ENCODE measurements at regions of chr7 and their contacts with region 1.

Region 1: DNA sequence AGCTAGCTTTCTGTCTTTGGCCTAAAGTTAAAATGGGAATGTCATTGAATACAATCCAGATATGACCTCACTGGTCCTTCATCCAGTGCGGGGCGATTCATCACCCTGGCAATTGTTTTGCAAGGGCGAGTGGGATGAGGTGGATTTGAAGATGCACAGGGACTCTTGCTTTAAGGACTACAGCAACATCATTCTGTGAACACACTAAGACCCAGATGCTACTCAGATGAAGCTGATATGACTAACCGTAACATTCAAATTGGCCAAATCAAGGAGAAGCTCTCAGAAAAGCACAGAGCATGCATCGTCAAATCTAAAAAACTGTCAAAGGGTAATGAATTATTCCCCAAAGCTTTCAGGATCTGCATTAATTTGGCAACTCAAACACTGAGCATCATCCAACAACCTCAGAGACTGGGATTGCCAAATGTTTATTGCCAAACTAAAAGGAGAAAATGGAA is 12.8 kb downstream of the CPA1 start:
- DNase-seq: no peak
- ATAC-seq: no peak
- H3K4me3 Mint-ChIP-seq: no peak overlapping the region
- H3K27ac Mint-ChIP-seq: peak overlapping the region; percentile 95
- H3K4me1 Mint-ChIP-seq: peaks cover 30% of the 10 kb centered on the region
- H3K27me3 Mint-ChIP-seq: peaks cover 2% of the 10 kb centered on the region

Region 2: DNA sequence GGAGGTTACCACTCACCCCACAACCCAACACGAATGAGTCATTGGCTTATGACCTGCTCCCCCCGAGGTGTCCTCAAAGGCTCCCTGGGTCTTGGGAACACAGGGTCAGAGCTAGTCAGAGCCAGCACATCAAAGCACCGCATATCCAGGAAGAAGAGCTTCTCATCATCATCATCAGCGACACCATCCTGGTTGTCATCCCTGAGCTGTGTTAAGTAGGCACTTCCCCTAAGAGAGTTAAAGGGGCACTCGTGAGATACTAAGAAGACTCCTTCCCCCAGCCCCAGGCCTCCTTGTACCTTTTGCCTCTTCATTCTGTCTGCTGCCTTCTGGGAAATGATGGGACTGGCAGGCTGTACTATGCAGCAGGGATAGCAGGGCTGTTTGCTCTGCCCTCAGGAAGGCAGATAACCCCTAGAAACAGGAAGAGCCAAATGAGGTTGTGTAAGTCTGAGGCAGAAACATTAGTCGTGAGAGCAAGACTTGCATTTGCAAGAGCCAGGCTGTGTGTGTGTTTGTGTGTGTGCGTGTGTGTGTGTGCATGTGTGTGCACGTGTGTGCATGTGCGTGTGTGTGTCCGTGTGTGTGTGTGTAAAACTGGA is 23.9 kb before region 1 on chr7:
- POLR2A ChIA-PET with region 1: interaction called, 12 read pairs
- DNase-seq: peak; percentile 42
- ATAC-seq: peak; percentile 44
- H3K4me3 Mint-ChIP-seq: peak overlapping the region; percentile 63
- H3K27ac Mint-ChIP-seq: peak overlapping the region; percentile 86
- H3K4me1 Mint-ChIP-seq: peaks cover 33% of the 10 kb centered on the region
- H3K27me3 Mint-ChIP-seq: no peaks in the 10 kb centered on the region

Region 3: DNA sequence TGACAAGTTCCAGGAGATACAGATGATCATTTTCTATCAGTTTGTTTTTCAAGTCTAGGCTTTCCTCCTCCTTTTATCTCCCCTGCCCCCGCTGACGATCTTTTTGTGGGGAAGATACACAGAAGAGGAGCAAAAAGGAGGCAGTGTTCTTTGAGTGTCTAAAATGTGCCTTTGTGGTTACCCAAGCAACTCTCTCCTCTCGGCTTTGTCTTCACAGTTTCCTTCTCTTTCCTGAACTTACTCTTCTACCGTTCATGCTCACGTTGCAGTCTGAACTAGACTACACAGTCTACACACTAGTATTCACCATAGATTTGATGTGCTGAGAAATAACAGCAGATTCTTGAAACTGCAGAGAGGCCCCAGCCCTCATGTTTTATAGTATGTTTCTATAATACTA is 24.1 kb after region 1 on chr7:
- POLR2A ChIA-PET with region 1: interaction called, 12 read pairs
- DNase-seq: no peak
- ATAC-seq: peak; percentile 62
- H3K4me3 Mint-ChIP-seq: peak overlapping the region; percentile 77
- H3K27ac Mint-ChIP-seq: peak overlapping the region; percentile 95
- H3K4me1 Mint-ChIP-seq: peaks cover 70% of the 10 kb centered on the region
- H3K27me3 Mint-ChIP-seq: no peaks in the 10 kb centered on the region

Region 4: DNA sequence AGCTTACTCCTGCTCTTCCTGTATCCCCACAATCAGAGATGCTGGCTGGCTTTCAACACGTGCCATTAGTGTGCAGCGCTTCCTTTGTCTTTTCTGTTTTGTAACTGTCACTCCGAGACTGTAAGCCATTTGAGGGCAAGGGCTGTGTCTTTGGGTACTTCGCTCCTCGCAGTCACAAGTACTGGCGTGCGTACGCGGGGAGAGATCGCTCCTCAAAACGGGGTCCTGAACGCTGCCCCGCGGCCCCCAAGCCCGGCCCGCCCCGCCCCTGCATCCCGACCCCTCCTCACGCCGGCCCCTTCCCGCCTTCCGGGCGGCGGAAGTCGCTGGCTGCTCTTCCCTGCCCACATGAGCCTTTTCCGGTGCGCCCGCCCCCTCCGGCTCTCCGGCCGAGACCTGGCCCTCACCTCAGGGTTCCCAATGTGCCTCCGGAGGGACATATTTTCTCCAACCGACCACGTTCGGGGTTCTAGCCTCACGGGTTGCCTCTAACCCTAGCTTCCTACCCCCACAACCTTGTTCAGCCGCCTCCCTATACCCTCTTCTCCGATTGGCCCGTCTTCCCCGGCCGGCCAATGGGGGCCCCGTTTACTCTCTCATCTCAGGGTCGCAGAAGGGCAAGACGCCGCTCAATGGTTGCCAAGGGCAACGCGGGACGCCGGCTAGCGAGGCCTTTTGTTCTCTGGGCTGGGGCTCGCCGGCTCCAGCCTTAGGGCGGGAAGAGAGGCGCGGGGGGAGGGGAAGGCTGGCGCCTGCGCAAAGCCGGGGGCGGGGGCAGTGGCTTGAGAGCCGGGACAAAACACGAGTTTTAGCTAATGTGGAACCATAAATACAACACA is 47.6 kb after region 1 on chr7 and contains the start of gene CEP41:
- POLR2A ChIA-PET with region 1: interaction called, 10 read pairs
- DNase-seq: peak; percentile 96
- ATAC-seq: peak; percentile 96
- H3K4me3 Mint-ChIP-seq: peak within 1 kb of the TSS; percentile 100
- H3K27ac Mint-ChIP-seq: peak within 1 kb of the TSS; percentile 98
- H3K4me1 Mint-ChIP-seq: peaks cover 41% of the 10 kb centered on the region
- H3K27me3 Mint-ChIP-seq: no peaks in the 10 kb centered on the region
- total RNA-seq, gene CEP41: 27.1 to 28.7 TPM

Region 5: GRCh38 chr7:130494431-130494858 is 101.3 kb after region 1 on chr7:
- POLR2A ChIA-PET with region 1: no interaction called
- DNase-seq: no peak
- ATAC-seq: no peak
- H3K4me3 Mint-ChIP-seq: no peak overlapping the region
- H3K27ac Mint-ChIP-seq: no peak overlapping the region
- H3K4me1 Mint-ChIP-seq: peaks cover 10% of the 10 kb centered on the region
- H3K27me3 Mint-ChIP-seq: peaks cover 34% of the 10 kb centered on the region

Measured in activated naive CD8-positive, alpha-beta T cell treated with anti-CD3 and anti-CD28 coated beads, Interleukin-2, amount 10 ng/mL, durations not matched to agents 7 days and 5 days (primary cell).